Activated naive CD4-positive, alpha-beta T cell treated with anti-CD3 and anti-CD28 coated beads for 36 hours (primary cell): ENCODE measurements at regions of chr4 and their contacts with region 1.

Region 1: DNA sequence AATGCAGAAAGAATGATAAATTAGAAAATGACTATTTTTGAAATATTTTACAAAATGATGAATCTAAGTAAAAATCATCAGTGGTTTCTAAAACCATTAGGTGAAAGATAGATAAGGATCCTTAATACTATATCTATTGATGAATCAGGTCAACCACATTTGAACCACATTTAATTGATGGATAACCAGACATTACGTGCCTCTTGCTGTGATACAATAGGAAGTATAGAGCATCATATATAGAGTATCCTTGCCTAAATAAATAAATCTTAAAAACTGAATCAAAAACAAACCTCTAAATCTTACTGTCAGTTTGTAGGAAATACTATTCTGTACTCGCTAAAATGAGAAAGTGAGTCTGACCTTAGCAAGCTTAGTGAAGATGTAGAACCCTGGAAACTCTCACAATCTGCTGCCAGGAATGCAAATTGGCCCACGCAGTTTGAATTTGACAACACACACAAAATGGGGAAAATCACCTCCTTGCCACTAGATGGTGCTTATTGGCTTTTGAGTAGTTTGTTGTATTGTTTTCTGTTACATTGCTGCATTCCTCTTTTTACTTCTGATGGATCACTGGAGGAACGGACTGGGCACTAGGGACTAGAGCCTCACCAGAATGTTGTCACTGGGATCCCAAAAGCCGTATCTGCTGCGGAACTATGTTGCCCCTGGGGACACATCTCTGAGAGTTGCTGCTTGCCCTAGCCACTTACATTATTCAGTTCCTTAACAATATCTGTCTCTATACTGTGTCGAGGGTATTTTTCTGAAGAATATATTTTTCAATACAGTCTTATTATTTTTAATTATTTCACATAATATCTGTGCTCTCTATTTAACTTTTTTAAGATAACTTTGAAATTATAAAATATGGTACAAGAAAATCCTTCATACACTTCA is 25.4 kb upstream of the SLAIN2 start:
- DNase-seq: peak; percentile 52
- H3K4me3 Mint-ChIP-seq: no peak overlapping the region
- H3K27ac Mint-ChIP-seq: no peak overlapping the region
- H3K4me1 Mint-ChIP-seq: peaks cover 3% of the 10 kb centered on the region
- H3K27me3 Mint-ChIP-seq: no peaks in the 10 kb centered on the region

Region 2: GRCh38 chr4:48429709-48430474 is 113.9 kb after region 1 on chr4:
- CTCF ChIA-PET with region 1: no interaction called
- intact Hi-C with region 1: loop called (anchors 5 kb)
- DNase-seq: peak; percentile 16
- H3K4me3 Mint-ChIP-seq: no peak overlapping the region
- H3K27ac Mint-ChIP-seq: no peak overlapping the region
- H3K4me1 Mint-ChIP-seq: peaks cover 49% of the 10 kb centered on the region
- H3K27me3 Mint-ChIP-seq: no peaks in the 10 kb centered on the region

Region 3: GRCh38 chr4:48483006-48483776 is 167.2 kb after region 1 on chr4 and contains the start of gene SLC10A4:
- CTCF ChIA-PET with region 1: no interaction called
- intact Hi-C with region 1: loop called (anchors 5 kb)
- DNase-seq: no peak
- H3K4me3 Mint-ChIP-seq: peak within 1 kb of the TSS; percentile 57
- H3K27ac Mint-ChIP-seq: no peak within 1 kb of the TSS
- H3K4me1 Mint-ChIP-seq: peaks cover 11% of the 10 kb centered on the region
- H3K27me3 Mint-ChIP-seq: peaks cover 63% of the 10 kb centered on the region
- total RNA-seq, gene SLC10A4: not detected

Region 4: DNA sequence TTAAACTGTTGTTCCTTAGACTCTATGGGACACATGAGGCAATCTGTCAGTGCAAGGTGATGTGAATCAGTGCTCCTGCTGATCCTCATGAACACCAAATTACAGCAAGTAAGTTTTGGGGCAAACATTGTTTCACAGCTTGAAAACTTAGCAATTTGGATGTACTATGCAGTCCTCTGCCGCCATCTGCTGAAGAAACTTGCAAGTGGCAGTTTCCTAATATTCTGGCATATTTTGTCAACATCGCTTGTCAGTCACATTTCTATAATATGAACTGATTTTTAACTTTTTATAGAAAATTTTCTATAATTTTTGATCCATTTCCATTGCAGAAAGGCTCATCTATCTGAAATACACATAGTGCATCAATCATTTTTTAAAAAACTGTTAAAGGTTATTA is 230.4 kb after region 1 on chr4:
- CTCF ChIA-PET with region 1: no interaction called
- intact Hi-C with region 1: loop called (anchors 1 kb)
- DNase-seq: peak; percentile 63
- H3K4me3 Mint-ChIP-seq: no peak overlapping the region
- H3K27ac Mint-ChIP-seq: no peak overlapping the region
- H3K4me1 Mint-ChIP-seq: no peaks in the 10 kb centered on the region
- H3K27me3 Mint-ChIP-seq: no peaks in the 10 kb centered on the region